Activated naive CD4-positive, alpha-beta T cell treated with anti-CD3 and anti-CD28 coated beads for 36 hours (primary cell): ENCODE measurements at regions of chr11 and their contacts with region 1.

Region 1: GRCh38 chr11:44280257-44280656 is 29.7 kb downstream of the ALX4 start:
- DNase-seq: no peak
- H3K4me3 Mint-ChIP-seq: no peak overlapping the region
- H3K27ac Mint-ChIP-seq: no peak overlapping the region
- H3K4me1 Mint-ChIP-seq: no peaks in the 10 kb centered on the region
- H3K27me3 Mint-ChIP-seq: no peaks in the 10 kb centered on the region

Region 2: GRCh38 chr11:44456544-44457300 is 176.5 kb after region 1 on chr11:
- CTCF ChIA-PET with region 1: interaction called, 10 read pairs
- intact Hi-C with region 1: no loop called
- DNase-seq: no peak
- H3K4me3 Mint-ChIP-seq: no peak overlapping the region
- H3K27ac Mint-ChIP-seq: no peak overlapping the region
- H3K4me1 Mint-ChIP-seq: no peaks in the 10 kb centered on the region
- H3K27me3 Mint-ChIP-seq: peaks cover 2% of the 10 kb centered on the region